Aorta (tissue), 5 donors: ENCODE measurements at regions of chr10 and their contacts with region 1.

Region 1: DNA sequence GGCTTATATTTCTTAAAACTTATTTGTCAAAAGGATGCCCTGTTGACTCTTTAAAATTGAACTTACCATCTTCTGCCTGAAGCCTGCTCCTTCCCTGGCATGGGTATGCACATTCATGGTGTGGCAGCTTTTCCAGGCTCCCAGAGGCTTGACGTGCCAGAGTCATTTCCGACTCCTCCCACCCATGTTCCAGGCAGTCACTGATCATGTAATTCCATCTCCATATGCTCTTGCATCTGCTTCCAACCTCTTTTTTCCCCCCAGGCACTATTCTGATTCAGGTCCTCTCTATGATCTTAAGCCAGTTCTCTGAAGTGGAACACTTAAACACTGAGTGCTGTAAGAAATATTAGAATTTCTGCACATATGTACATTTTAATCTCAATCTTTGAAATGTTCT is 82.2 kb downstream of the CFAP58 start:
- DNase-seq: no peak
- ATAC-seq: no peak
- H3K4me3 ChIP-seq: no peak overlapping the region
- H3K27ac ChIP-seq: no peak overlapping the region
- H3K4me1 ChIP-seq: no peaks in the 10 kb centered on the region
- H3K27me3 ChIP-seq: no peaks in the 10 kb centered on the region

Region 2: DNA sequence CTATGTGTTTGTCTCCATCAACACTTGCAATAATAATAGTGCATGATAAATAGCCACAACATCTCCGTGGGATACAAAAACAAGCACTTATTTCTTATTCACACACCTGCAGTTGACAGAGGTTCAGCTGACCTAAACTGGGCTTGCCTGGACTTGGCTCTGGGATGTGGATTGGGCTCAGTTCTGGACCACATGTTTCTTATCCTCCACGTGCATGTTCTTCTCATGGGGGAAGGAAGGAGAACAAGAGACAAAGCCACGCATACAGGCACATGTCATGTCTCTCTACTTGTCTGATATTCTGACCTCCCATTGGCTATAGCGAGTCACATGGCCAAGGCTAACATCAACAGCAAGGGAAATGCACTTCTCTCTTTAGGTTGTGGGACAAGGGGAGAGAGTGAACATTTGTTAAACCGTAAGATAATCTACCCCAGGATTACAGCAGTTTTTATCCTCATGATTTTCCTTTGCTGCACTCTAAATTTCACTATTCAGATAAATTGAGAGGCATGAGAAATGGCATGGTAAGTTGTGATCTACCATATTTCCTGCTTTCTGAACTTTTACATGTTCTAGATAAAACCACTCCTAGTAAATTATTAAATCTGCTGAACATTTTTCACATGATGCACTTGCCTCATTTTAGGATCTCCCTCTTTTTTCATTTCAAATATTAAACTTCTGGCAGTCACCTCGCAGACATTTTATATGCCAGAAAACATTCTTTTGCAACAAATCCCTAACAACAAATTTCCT is 48.5 kb before region 1 on chr10:
- intact Hi-C with region 1: no loop called
- DNase-seq: no peak
- ATAC-seq: no peak
- H3K4me3 ChIP-seq: no peak overlapping the region
- H3K27ac ChIP-seq: no peak overlapping the region
- H3K4me1 ChIP-seq: no peaks in the 10 kb centered on the region
- H3K27me3 ChIP-seq: peaks cover 0 to 2% of the 10 kb centered on the region in 2 donors

Region 3: DNA sequence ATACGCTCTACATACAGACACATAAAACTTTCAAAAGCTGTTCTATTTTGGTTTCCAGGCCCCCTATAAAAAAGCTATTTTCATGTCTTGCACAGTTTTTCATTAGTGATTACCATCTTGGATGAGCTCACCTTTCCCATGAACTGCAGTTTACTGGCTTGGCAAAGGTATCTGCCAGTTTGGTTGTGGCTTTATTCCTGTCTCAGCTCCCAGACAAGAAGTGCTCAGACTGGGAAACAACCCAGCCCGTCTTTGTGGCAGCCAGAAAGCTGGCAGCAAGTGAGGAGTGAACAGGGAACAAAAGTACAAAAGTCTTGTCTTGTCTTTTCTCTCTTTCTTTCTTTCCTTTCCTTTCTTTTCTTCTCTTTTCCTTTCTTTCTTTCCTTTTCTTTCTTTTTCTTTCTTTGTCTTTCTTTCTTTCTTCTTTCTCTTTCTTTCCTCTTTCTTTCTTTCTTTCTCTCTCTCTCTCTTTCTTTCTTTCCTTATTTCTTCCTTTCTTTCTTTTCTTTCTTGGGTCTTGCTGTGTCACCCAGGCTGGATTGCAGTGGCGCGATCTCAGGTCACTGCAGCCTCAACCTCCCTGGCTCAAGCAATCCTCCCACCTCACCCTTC is 56.6 kb after region 1 on chr10:
- intact Hi-C with region 1: loop called in 1 of 2 experiments (anchors 10 kb)
- DNase-seq: peak in 1 of 2 donors; percentile 58
- ATAC-seq: no peak
- H3K4me3 ChIP-seq: no peak overlapping the region
- H3K27ac ChIP-seq: no peak overlapping the region
- H3K4me1 ChIP-seq: no peaks in the 10 kb centered on the region
- H3K27me3 ChIP-seq: no peaks in the 10 kb centered on the region

Region 4: DNA sequence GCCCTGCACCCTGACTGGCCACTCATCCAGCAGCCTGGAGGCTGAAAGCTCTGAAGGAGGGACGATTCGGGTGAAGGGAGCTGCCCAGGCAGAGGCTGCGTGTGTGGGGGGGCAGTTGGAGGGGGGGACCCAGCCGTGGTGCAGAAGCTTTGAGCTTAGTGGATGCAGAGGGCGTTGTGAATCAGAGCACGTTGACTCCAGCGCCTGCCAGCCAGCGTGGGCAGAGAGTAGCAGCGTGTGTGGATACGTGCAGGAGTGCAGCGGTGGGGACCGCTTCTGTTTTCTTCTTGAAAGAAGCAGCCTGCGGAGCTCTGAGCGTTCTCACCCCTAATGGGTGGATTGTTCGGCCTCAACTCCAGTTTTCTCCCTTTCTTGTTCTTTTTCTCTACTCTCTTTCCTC is 252.4 kb after region 1 on chr10:
- intact Hi-C with region 1: no loop called
- DNase-seq: no peak
- ATAC-seq: no peak
- H3K4me3 ChIP-seq: no peak overlapping the region
- H3K27ac ChIP-seq: no peak overlapping the region
- H3K4me1 ChIP-seq: no peaks in the 10 kb centered on the region
- H3K27me3 ChIP-seq: no peaks in the 10 kb centered on the region